MCF 10A (cell line): ENCODE measurements at regions of chr4 and their contacts with region 1.

Region 1: GRCh38 chr4:154928640-154929257 is 147.7 kb downstream of the RBM46 start:
- DNase-seq: peak; percentile 54
- H3K4me3 Mint-ChIP-seq: no peak overlapping the region
- H3K27ac Mint-ChIP-seq: no peak overlapping the region
- H3K4me1 Mint-ChIP-seq: peaks cover 5% of the 10 kb centered on the region
- H3K27me3 Mint-ChIP-seq: no peaks in the 10 kb centered on the region
- CTCF ChIP-seq: peak; percentile 46

Region 2: GRCh38 chr4:154590329-154591006 is 338.3 kb before region 1 on chr4 and contains the start of gene FGA:
- CTCF ChIA-PET with region 1: no interaction called
- POLR2A ChIA-PET with region 1: no interaction called
- intact Hi-C with region 1: no loop called
- DNase-seq: no peak
- H3K4me3 Mint-ChIP-seq: no peak within 1 kb of the TSS
- H3K27ac Mint-ChIP-seq: no peak within 1 kb of the TSS
- H3K4me1 Mint-ChIP-seq: peaks cover 5% of the 10 kb centered on the region
- H3K27me3 Mint-ChIP-seq: no peaks in the 10 kb centered on the region
- CTCF ChIP-seq: no peak
- total RNA-seq, gene FGA: not detected in 2 replicates

Region 3: DNA sequence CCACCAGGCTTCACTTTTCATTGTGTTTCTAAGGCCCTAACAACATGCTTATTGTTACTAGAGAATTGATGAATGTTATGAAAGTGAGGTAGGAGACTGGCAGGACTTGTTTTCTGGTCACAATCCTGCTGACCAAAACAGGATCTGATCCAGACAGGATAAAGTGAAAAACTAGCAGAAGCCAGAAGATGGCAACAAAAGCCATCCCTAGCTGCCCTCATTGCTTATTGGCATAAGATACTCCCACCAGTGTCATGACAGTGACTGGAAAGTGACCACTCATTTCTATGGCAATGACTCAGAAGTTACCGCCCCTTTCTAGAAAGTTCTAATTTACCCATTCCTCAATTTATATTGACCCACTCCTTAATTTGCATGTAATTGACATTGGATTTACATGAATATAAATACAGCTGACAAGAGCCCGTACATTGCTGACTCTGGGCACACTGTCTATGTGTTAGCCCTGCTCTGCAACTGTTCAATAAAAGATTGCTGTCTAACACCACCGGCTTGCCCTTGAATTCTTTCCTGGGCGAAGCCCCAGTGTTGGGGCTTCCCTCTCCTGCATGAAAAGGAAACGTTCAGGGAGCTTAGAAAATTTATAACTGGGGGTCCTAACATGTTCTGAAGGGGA is 286.3 kb before region 1 on chr4:
- CTCF ChIA-PET with region 1: no interaction called
- POLR2A ChIA-PET with region 1: no interaction called
- intact Hi-C with region 1: no loop called
- DNase-seq: no peak
- H3K4me3 Mint-ChIP-seq: no peak overlapping the region
- H3K27ac Mint-ChIP-seq: no peak overlapping the region
- H3K4me1 Mint-ChIP-seq: peaks cover 14% of the 10 kb centered on the region
- H3K27me3 Mint-ChIP-seq: no peaks in the 10 kb centered on the region
- CTCF ChIP-seq: no peak

Region 4: DNA sequence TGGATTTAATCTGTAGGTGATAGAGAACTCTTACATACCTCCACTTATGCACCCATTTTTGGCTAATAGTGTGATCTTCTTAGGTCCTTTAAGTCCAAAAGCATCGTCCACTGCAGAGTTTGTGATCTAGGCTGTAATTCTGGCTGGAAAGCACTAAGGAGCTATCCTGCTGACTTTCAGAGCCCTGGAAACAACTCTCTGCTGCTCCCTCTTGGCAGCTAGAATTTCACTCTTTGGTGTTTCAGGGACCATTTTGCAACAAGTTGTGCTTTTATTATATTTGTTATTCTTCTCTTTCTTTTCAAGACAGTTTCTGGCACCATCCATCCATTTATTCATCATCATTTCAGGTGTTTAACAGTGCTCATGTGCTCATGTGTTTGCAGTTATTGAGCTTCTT is 17.7 kb before region 1 on chr4:
- CTCF ChIA-PET with region 1: interaction called, 13 read pairs
- POLR2A ChIA-PET with region 1: no interaction called
- intact Hi-C with region 1: no loop called
- DNase-seq: peak; percentile 23
- H3K4me3 Mint-ChIP-seq: no peak overlapping the region
- H3K27ac Mint-ChIP-seq: no peak overlapping the region
- H3K4me1 Mint-ChIP-seq: peaks cover 14% of the 10 kb centered on the region
- H3K27me3 Mint-ChIP-seq: no peaks in the 10 kb centered on the region
- CTCF ChIP-seq: no peak